Activated T-helper 2 cell treated with anti-CD3 and anti-CD28 coated beads, Interferon-gamma antibody, Interleukin-2, Interleukin-4, amounts not matched to agents 10 μg/mL and 5 μg/mL and 100 μg/mL, durations not matched to agents 14 hours and 24 hours and 36 hours (primary cell): ENCODE measurements at regions of chr11 and their contacts with region 1.

Region 1: DNA sequence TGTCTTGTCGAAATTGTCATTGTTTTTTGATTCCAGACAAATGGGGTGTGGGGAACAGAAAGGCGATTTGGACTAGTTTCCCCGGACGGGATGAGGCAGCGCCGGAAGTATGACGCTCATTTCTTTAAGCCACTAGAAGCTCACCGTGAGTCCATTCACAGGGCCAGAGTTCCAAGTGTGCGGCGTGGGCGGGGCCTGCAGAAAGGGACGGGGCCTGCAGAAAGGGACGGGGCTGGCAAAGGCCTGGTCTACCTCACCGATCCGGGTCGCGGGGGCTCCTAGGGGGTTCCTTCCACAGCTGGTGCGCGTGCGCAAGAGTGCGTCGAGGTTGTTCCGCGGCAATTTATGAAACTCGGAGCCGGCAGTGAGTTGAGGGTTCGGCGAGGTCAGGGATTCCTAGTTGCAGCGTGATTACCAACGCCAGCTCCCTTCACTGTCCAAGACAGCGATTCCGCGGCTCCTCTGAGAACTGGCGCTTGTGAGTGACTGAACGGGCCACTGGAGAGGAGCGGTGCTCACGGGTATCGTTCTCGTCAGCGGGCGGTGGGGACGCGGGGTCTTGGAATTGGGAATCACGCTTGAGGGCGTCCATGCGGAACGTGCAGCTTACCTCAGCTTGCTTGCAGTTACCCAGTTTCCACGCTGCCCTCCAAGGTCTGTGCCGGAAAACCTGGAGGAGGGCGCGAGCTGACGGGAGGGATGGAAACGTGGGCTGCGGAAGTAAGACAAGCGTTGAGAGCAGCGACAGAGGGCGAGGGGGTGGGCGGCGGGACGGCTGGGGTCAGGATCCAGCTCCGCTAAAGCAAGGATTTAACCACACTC is at the start of gene ZNF215:
- DNase-seq: peak; percentile 45
- H3K4me3 Mint-ChIP-seq: peak within 1 kb of the TSS; percentile 83
- H3K27ac Mint-ChIP-seq: peak within 1 kb of the TSS; percentile 47
- H3K4me1 Mint-ChIP-seq: peaks cover 32% of the 10 kb centered on the region
- H3K27me3 Mint-ChIP-seq: peaks cover 36% of the 10 kb centered on the region
- total RNA-seq, gene ZNF215: 5.1 and 6.7 TPM in 2 replicates

Region 2: DNA sequence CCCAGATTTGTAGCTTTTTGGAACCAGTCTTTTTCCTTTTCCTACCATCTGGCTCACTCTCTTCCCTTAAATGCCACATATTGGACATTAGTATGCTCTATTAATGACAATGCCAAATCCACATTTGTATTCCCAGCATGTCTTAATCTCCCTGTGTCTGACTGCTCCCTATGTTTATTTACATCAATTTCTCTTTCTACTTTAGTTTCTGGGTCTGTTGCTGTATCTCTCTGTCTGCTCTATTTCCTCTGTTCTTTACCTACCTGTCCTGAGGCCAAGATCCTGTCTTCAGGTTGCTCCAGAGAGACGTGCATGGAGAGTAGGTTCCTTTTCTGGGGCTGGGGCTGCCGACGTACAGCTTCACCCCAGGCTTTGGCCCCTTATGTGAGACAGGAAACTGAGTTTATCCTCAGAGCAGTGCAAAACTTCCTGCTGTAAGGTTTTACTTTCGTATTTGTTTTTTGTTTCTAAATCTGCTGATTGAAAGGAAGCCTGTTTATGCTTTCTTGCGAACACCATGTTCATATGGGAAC is 180.3 kb before region 1 on chr11:
- intact Hi-C with region 1: loop called (anchors 5 kb)
- DNase-seq: peak; percentile 49
- H3K4me3 Mint-ChIP-seq: no peak overlapping the region
- H3K27ac Mint-ChIP-seq: no peak overlapping the region
- H3K4me1 Mint-ChIP-seq: peaks cover 24% of the 10 kb centered on the region
- H3K27me3 Mint-ChIP-seq: no peaks in the 10 kb centered on the region

Region 3: GRCh38 chr11:6771926-6772893 is 154.2 kb before region 1 on chr11 and contains the start of gene OR2AG2:
- intact Hi-C with region 1: no loop called
- DNase-seq: no peak
- H3K4me3 Mint-ChIP-seq: no peak within 1 kb of the TSS
- H3K27ac Mint-ChIP-seq: no peak within 1 kb of the TSS
- H3K4me1 Mint-ChIP-seq: peaks cover 2% of the 10 kb centered on the region
- H3K27me3 Mint-ChIP-seq: peaks cover 17% of the 10 kb centered on the region
- total RNA-seq, gene OR2AG2: 0.34 and 0.60 TPM in 2 replicates

Region 4: DNA sequence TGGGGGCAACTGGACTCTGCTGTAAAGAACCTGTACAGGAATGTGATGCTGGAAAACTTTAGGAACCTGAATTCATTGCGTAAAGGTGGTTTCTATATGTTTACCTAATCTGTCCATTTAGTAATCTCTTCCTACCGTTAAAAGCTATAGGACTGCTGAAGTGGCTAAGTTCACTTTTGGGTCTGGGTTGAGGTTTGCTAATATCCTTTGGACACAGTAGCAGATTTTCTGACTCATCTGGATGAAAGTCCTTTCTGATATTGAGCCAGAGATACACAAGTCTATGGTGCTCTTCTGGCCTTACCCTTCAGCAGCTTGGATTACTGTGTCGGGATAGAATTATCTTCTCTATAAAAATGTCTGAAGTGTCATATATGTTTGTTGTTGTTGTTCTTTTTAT is 16.7 kb after region 1 on chr11:
- intact Hi-C with region 1: no loop called
- DNase-seq: no peak
- H3K4me3 Mint-ChIP-seq: no peak overlapping the region
- H3K27ac Mint-ChIP-seq: no peak overlapping the region
- H3K4me1 Mint-ChIP-seq: no peaks in the 10 kb centered on the region
- H3K27me3 Mint-ChIP-seq: peaks cover 2% of the 10 kb centered on the region

Region 5: GRCh38 chr11:7031471-7031871 is 105.1 kb after region 1 on chr11:
- intact Hi-C with region 1: no loop called
- DNase-seq: no peak
- H3K4me3 Mint-ChIP-seq: no peak overlapping the region
- H3K27ac Mint-ChIP-seq: no peak overlapping the region
- H3K4me1 Mint-ChIP-seq: no peaks in the 10 kb centered on the region
- H3K27me3 Mint-ChIP-seq: no peaks in the 10 kb centered on the region